Left ventricle myocardium superior (tissue), 1 donor: ENCODE measurements at regions of chr3 and their contacts with region 1.

Region 1: GRCh38 chr3:187210545-187211327 is 13.4 kb downstream of the RTP1 start:
- DNase-seq: no peak
- ATAC-seq: peak; percentile 43

Region 2: GRCh38 chr3:187291001-187291511 is 80.3 kb after region 1 on chr3:
- intact Hi-C with region 1: loop called (anchors 10 kb)
- DNase-seq: no peak
- ATAC-seq: peak; percentile 44

Region 3: DNA sequence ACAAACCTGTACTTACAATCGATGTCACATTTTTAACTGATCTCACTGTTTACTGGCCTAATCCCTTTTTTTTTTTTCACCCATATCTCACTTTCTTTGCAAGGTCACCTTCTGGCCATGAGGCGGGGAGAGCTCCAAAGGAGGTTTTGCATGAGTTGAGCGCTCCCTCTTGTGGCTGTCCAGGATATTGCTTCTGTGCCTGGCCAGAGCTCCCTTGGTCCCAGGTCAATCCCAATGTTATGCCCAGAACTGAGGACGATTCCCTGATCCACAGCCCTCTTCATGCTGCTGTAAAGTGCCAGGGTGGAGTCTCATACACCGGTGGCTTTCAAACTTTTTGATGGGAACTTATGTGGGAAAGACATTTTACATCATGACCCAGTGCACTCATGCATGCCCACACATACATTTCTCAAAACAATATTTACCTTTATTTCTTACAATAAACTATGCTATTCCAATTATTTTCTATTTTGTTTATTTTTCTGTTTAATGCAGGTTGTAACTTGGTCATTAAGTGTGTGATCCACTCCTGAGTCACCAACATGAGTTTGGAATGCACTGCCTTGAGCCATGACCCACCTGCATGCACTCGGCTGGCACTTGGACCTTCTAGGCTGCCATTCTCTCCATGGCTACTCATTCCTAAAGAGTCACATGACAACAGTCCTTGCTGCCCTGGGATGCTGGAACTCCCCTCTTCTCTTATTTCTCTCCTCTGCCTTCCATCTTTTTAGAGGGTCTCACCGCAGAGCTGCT is 469.1 kb after region 1 on chr3:
- intact Hi-C with region 1: loop called (anchors 10 kb)
- DNase-seq: peak; percentile 80
- ATAC-seq: peak; percentile 97